Esophagus squamous epithelium (tissue), 5 donors: ENCODE measurements at regions of chr1 and their contacts with region 1.

Region 1: DNA sequence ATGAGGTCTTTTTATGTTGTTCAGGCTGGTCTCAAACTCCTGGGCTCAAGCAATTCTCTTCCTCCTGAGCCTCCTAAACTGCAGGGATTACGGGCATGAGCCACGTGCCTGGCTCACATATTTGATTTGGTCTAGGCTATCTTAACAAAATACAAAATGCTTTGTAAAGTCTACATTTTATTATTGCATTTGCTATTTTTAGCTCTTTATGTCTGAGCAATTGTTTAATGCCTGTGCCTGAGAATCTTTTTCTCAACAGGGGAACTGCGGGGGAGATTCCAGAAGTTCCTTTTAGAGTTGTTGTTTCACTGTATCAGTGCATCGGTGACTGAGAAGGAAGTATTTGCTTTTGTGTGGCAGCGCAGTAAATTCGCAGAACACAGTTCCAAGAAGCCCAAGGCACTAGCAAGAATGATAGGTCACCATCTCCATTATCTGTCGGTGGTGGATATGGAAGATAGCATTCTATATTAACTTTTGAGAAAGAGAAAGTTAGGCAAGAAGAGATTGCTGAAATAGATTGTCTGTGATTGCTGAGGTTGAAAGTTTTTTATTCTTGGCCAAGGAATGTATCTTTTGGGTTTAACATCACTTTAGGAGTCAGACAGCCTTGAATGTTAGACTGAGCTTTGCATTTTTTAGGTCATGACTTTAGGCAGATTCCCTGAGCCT is 167.3 kb downstream of the PDE4B start:
- DNase-seq: no peak
- H3K4me3 ChIP-seq: no peak overlapping the region
- H3K27ac ChIP-seq: no peak overlapping the region
- H3K4me1 ChIP-seq: no peaks in the 10 kb centered on the region
- H3K27me3 ChIP-seq: peaks cover 0 to 2% (median 0%) of the 10 kb centered on the region in 4 donors
- CTCF ChIP-seq: no peak
- POLR2A ChIP-seq: no peak

Region 2: GRCh38 chr1:66137235-66137634 is 177.2 kb after region 1 on chr1:
- intact Hi-C with region 1: no loop called
- DNase-seq: no peak
- H3K4me3 ChIP-seq: no peak overlapping the region
- H3K27ac ChIP-seq: no peak overlapping the region
- H3K4me1 ChIP-seq: no peaks in the 10 kb centered on the region
- H3K27me3 ChIP-seq: no peaks in the 10 kb centered on the region
- CTCF ChIP-seq: no peak
- POLR2A ChIP-seq: no peak

Region 3: GRCh38 chr1:66242646-66243547 is 282.9 kb after region 1 on chr1:
- intact Hi-C with region 1: loop called (anchors 5 kb)
- DNase-seq: peak; percentile 9
- H3K4me3 ChIP-seq: no peak overlapping the region
- H3K27ac ChIP-seq: no peak overlapping the region
- H3K4me1 ChIP-seq: peaks cover 0 to 6% (median 0%) of the 10 kb centered on the region in 3 donors
- H3K27me3 ChIP-seq: no peaks in the 10 kb centered on the region
- CTCF ChIP-seq: peak; percentile 90 to 98 (median 96)
- POLR2A ChIP-seq: no peak

Region 4: GRCh38 chr1:66446261-66447001 is 486.4 kb after region 1 on chr1:
- intact Hi-C with region 1: loop called (anchors 5 kb)
- DNase-seq: no peak
- H3K4me3 ChIP-seq: no peak overlapping the region
- H3K27ac ChIP-seq: peak overlapping the region in 3 of 4 donors; percentile 38 to 61 (median 60)
- H3K4me1 ChIP-seq: peaks cover 0 to 12% (median 3%) of the 10 kb centered on the region in 3 donors
- H3K27me3 ChIP-seq: no peaks in the 10 kb centered on the region
- CTCF ChIP-seq: peak; percentile 76 to 95 (median 88)
- POLR2A ChIP-seq: no peak